ENCODE measurements at regions of chr22 and their contacts with region 1.

Region 1: GRCh38 chr22:29072193-29072978 is 449 bp upstream of the KREMEN1 start:
- DNase-seq: peak; percentile 76
- ATAC-seq: peak; percentile 99
- H3K4me3 Mint-ChIP-seq: peak overlapping the region; percentile 72
- H3K27ac Mint-ChIP-seq: no peak overlapping the region
- H3K4me1 Mint-ChIP-seq: peaks cover 25% of the 10 kb centered on the region
- H3K27me3 Mint-ChIP-seq: peaks cover 59% of the 10 kb centered on the region
- CTCF ChIP-seq: no peak

Region 2: DNA sequence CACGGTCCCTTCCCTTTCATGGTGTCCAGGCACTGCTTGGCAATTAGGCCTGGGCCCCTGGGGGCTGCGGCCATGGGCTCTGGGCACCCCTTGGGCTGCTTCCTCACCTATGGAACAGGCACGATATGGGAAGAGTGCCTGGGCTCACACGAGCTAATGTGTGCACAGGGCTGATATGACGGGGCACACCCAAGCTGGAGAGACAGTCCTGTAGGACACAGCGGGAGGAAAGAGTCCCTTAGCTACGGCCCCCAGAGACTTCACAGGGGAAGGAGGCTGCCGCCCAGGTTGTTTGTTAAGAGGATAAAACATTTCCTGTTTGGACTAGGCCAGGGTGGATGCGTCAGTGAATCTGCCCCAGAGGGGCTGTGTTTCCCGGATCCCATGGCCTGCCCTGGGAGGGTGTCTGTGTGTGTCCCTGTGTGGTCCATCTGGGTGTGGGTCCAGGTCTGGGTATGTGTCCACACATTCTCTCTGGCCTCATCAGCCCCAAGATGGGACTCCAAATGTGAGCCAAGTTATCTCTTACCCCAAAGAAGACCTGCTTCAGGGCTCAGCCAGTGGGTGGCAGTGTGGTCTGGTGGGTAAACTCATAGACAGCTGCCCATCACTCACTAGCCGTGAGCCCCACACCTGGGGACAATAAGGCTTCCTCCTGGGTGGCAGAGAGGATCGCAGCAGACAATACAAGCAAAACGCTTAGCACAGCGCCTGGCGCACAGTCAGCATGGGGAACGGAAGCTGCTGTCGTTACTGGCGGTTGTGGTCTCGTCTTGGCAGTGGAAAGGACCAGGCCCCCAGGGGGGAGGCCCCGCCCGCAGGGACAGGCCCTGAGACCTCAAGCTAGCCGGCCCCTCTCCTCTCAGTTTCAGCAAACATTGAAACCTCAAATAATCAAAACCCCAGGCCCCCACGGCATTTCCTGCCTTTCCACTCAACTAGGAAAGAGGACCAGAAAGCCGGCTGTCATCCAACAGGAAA is 130.1 kb after region 1 on chr22:
- CTCF ChIA-PET with region 1: no interaction called
- POLR2A ChIA-PET with region 1: no interaction called
- intact Hi-C with region 1: loop called (anchors 10 kb)
- DNase-seq: no peak
- ATAC-seq: peak; percentile 79
- H3K4me3 Mint-ChIP-seq: no peak overlapping the region
- H3K27ac Mint-ChIP-seq: no peak overlapping the region
- H3K4me1 Mint-ChIP-seq: peaks cover 17% of the 10 kb centered on the region
- H3K27me3 Mint-ChIP-seq: peaks cover 56% of the 10 kb centered on the region
- CTCF ChIP-seq: no peak